ENCODE measurements at regions of chr15 and their contacts with region 1.

Region 1: GRCh38 chr15:24956111-24956838 is 1.5 kb downstream of the SNRPN start:
- DNase-seq: peak; percentile 45 to 89 (median 74)
- ATAC-seq: peak; percentile 76
- H3K4me3 ChIP-seq: peak overlapping the region; percentile 89
- H3K4me3 Mint-ChIP-seq: peak overlapping the region; percentile 96
- H3K27ac ChIP-seq: peak overlapping the region; percentile 85 to 92
- H3K27ac Mint-ChIP-seq: peak overlapping the region; percentile 99
- H3K4me1 ChIP-seq: peaks cover 8% of the 10 kb centered on the region
- H3K4me1 Mint-ChIP-seq: peaks cover 19% of the 10 kb centered on the region
- H3K27me3 ChIP-seq: no peaks in the 10 kb centered on the region
- H3K27me3 Mint-ChIP-seq: no peaks in the 10 kb centered on the region
- CTCF ChIP-seq: no peak

Region 2: DNA sequence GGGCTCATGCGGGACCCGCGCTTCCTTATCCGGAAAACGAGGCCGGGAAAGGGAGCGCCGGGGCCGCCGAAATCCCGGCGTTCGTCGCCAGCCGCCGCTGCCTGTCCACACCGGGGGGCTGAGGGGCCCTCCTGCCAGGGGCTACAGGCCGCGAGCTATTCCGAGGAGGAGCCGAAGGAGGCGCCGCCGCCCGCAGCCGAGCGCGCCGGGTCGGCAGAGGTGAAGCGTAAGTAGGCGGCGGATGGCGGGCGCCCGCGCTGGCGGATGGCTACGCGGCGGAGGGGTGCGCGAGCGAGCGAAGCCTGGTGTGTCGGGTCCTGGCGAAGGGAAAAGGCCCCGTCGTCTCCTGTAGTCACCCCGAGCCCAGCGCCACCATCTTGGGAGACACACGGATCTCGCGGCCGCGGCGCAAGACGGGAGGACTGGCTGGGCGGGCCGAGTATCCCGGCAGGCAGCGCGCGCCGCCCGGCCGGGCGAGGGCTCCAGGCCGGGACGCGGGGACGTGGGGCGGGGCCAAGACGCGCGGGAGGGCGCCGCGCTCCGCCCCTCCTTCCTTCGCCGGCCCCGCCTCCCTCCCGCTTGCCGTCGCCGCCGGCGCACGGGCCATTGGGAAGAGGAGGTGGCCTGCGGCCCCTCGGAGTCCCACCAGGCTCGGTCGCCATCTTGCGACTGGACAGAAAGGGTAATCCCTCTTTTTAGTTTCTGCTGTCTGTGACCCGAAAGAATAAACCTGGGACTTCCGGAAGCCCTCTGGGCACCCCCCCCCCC is 482.5 kb after region 1 on chr15 and contains the start of gene UBE3A:
- CTCF ChIA-PET with region 1: no interaction called
- POLR2A ChIA-PET with region 1: interaction called, 5 read pairs
- intact Hi-C with region 1: loop called in 1 of 2 experiments (anchors 5 kb)
- DNase-seq: peak; percentile 70 to 96 (median 84)
- ATAC-seq: peak; percentile 90
- H3K4me3 ChIP-seq: peak within 1 kb of the TSS; percentile 82
- H3K4me3 Mint-ChIP-seq: peak within 1 kb of the TSS; percentile 99
- H3K27ac ChIP-seq: peak within 1 kb of the TSS; percentile 67 to 92
- H3K27ac Mint-ChIP-seq: peak within 1 kb of the TSS; percentile 95
- H3K4me1 ChIP-seq: peaks cover 13% of the 10 kb centered on the region
- H3K4me1 Mint-ChIP-seq: peaks cover 48% of the 10 kb centered on the region
- H3K27me3 ChIP-seq: no peaks in the 10 kb centered on the region
- H3K27me3 Mint-ChIP-seq: no peaks in the 10 kb centered on the region
- CTCF ChIP-seq: no peak
- total RNA-seq, gene UBE3A: 124 to 126 TPM

Region 3: GRCh38 chr15:26082221-26083109 is 1126.2 kb after region 1 on chr15:
- CTCF ChIA-PET with region 1: no interaction called
- POLR2A ChIA-PET with region 1: no interaction called
- intact Hi-C with region 1: loop called in 1 of 2 experiments (anchors 5 kb)
- DNase-seq: peak; percentile 89 to 98 (median 95)
- ATAC-seq: peak; percentile 95
- H3K4me3 ChIP-seq: peak overlapping the region; percentile 67
- H3K4me3 Mint-ChIP-seq: peak overlapping the region; percentile 89
- H3K27ac ChIP-seq: peak overlapping the region; percentile 56 to 57
- H3K27ac Mint-ChIP-seq: peak overlapping the region; percentile 98
- H3K4me1 ChIP-seq: peaks cover 16% of the 10 kb centered on the region
- H3K4me1 Mint-ChIP-seq: peaks cover 57% of the 10 kb centered on the region
- H3K27me3 ChIP-seq: no peaks in the 10 kb centered on the region
- H3K27me3 Mint-ChIP-seq: peaks cover 14% of the 10 kb centered on the region
- CTCF ChIP-seq: no peak

Measured in CD4-positive, alpha-beta T cell (primary cell).